H1 (cell line): ENCODE measurements at regions of chr21 and their contacts with region 1.

Region 1: GRCh38 chr21:39313571-39314142 is at the start of gene BRWD1:
- DNase-seq: peak; percentile 51 to 88
- H3K4me3 ChIP-seq: peak within 1 kb of the TSS; percentile 63 to 80 (median 69)
- H3K27ac ChIP-seq: peak within 1 kb of the TSS; percentile 98
- H3K4me1 ChIP-seq: peaks cover 4 to 5% (median 4%) of the 10 kb centered on the region in 4 experiments; a peak in 5 of 7 replicates
- H3K27me3 ChIP-seq: no peaks in the 10 kb centered on the region
- CTCF ChIP-seq: peak in 1 of 3 experiments; percentile 26; a peak in 2 of 4 replicates
- EP300 ChIP-seq: no peak
- POLR2A ChIP-seq: peak; percentile 91 to 93
- RAD21 ChIP-seq: no peak; a peak in 1 of 4 replicates
- total RNA-seq, gene BRWD1: 45.2 and 47.3 TPM in 2 replicates

Region 2: GRCh38 chr21:39183237-39184007 is 130.2 kb before region 1 on chr21 and contains the start of gene PSMG1:
- CTCF ChIA-PET with region 1: no interaction called
- POLR2A ChIA-PET with region 1: interaction called, 17 read pairs
- DNase-seq: peak; percentile 77 to 98
- H3K4me3 ChIP-seq: peak within 1 kb of the TSS; percentile 83 to 94 (median 86)
- H3K27ac ChIP-seq: peak within 1 kb of the TSS; percentile 89
- H3K4me1 ChIP-seq: peaks cover 0 to 5% (median 3%) of the 10 kb centered on the region in 4 experiments; a peak in 4 of 7 replicates
- H3K27me3 ChIP-seq: no peaks in the 10 kb centered on the region
- CTCF ChIP-seq: no peak
- EP300 ChIP-seq: no peak
- POLR2A ChIP-seq: peak; percentile 85 to 98
- RAD21 ChIP-seq: no peak
- total RNA-seq, gene PSMG1: 93.0 and 93.7 TPM in 2 replicates

Region 3: DNA sequence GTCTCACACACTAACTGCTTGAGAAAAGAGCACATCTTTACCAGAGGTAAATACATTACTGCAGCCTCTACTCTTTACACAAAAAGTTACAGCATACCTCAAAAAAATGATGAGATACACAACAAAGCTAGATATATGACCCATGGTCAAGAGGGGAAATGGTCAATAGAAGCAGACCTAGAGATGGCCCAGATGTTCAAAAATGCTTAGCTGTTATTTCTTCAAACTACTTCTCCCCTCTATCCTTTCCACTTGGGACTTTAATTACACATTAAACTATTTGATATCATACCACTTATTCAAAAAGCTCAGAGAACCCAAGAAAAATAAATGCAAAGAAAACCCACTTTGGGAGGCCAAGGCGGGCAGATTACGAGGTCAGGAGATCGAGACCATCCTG is 13.1 kb before region 1 on chr21:
- CTCF ChIA-PET with region 1: no interaction called
- POLR2A ChIA-PET with region 1: interaction called, 32 read pairs
- DNase-seq: no peak
- H3K4me3 ChIP-seq: no peak overlapping the region
- H3K27ac ChIP-seq: no peak overlapping the region
- H3K4me1 ChIP-seq: no peaks in the 10 kb centered on the region
- H3K27me3 ChIP-seq: no peaks in the 10 kb centered on the region
- CTCF ChIP-seq: no peak
- EP300 ChIP-seq: no peak
- POLR2A ChIP-seq: no peak
- RAD21 ChIP-seq: no peak

Region 4: GRCh38 chr21:39326607-39327307 is 13.1 kb after region 1 on chr21:
- CTCF ChIA-PET with region 1: interaction called, 3 read pairs
- POLR2A ChIA-PET with region 1: interaction called, 51 read pairs
- DNase-seq: no peak
- H3K4me3 ChIP-seq: no peak overlapping the region
- H3K27ac ChIP-seq: no peak overlapping the region
- H3K4me1 ChIP-seq: peaks cover 0 to 2% (median under 1%) of the 10 kb centered on the region in 4 experiments; a peak in 2 of 7 replicates
- H3K27me3 ChIP-seq: no peaks in the 10 kb centered on the region
- CTCF ChIP-seq: no peak
- EP300 ChIP-seq: no peak
- POLR2A ChIP-seq: no peak
- RAD21 ChIP-seq: no peak

Region 5: DNA sequence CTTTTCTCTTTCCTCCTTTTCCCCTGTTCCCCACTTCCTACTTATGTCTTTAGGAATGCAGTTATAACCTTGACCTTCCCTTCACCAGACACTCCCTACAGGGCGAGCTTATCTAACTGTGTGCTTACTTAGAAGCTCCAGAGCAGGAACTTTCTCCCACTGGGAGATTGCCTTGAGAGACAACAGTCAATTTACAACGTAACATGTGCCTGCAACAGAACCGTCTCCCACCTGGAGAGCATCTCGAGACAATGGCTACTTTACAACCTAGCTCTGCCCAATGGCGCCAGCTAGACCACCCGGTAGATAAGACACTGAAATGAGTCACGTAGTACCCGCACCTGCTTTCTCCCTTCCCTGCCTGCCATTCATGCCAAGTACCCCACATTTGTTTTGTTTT is 18.5 kb after region 1 on chr21:
- CTCF ChIA-PET with region 1: interaction called, 3 read pairs
- POLR2A ChIA-PET with region 1: interaction called, 51 read pairs
- DNase-seq: no peak
- H3K4me3 ChIP-seq: no peak overlapping the region
- H3K27ac ChIP-seq: no peak overlapping the region
- H3K4me1 ChIP-seq: no peaks in the 10 kb centered on the region; a peak in 1 of 7 replicates
- H3K27me3 ChIP-seq: no peaks in the 10 kb centered on the region
- CTCF ChIP-seq: no peak
- EP300 ChIP-seq: no peak
- POLR2A ChIP-seq: no peak
- RAD21 ChIP-seq: no peak

Region 6: DNA sequence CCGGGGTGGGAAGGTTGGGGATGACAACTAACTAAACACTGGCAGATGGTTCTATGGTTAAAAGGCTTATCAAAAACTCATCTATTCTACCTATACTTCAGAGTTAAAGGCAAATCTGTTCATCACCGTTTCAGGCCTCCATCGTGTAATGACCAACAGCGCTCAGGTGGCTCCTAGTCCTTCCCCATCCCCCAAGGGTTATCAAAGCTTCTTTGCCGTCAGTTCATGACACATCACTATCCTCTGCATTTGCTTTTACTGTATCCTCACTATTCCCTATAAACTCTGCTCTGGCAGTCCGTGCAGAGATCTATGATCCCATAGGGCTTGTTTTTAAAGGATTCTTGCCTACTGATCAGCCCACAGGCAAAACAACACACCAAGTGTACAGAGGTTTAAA is 27.0 kb after region 1 on chr21:
- CTCF ChIA-PET with region 1: interaction called, 5 read pairs
- POLR2A ChIA-PET with region 1: interaction called, 24 read pairs
- DNase-seq: no peak
- H3K4me3 ChIP-seq: no peak overlapping the region
- H3K27ac ChIP-seq: no peak overlapping the region
- H3K4me1 ChIP-seq: peaks cover 0 to 3% (median 0%) of the 10 kb centered on the region in 4 experiments; a peak in 1 of 7 replicates
- H3K27me3 ChIP-seq: no peaks in the 10 kb centered on the region
- CTCF ChIP-seq: no peak
- EP300 ChIP-seq: no peak
- POLR2A ChIP-seq: no peak
- RAD21 ChIP-seq: no peak

Region 7: GRCh38 chr21:39388038-39388810 is 74.6 kb after region 1 on chr21:
- CTCF ChIA-PET with region 1: no interaction called
- POLR2A ChIA-PET with region 1: interaction called, 13 read pairs
- DNase-seq: peak; percentile 79 to 99
- H3K4me3 ChIP-seq: peak overlapping the region; percentile 4 to 55 (median 38); a peak in 6 of 8 replicates
- H3K27ac ChIP-seq: no peak overlapping the region
- H3K4me1 ChIP-seq: peaks cover 0 to 2% (median 0%) of the 10 kb centered on the region in 4 experiments; a peak in 1 of 7 replicates
- H3K27me3 ChIP-seq: no peaks in the 10 kb centered on the region
- CTCF ChIP-seq: peak; percentile 91 to 94 (median 92)
- EP300 ChIP-seq: no peak
- POLR2A ChIP-seq: no peak
- RAD21 ChIP-seq: peak; percentile 87 to 92